IMR-90 (cell line): ENCODE measurements at regions of chr1 and their contacts with region 1.

Region 1: DNA sequence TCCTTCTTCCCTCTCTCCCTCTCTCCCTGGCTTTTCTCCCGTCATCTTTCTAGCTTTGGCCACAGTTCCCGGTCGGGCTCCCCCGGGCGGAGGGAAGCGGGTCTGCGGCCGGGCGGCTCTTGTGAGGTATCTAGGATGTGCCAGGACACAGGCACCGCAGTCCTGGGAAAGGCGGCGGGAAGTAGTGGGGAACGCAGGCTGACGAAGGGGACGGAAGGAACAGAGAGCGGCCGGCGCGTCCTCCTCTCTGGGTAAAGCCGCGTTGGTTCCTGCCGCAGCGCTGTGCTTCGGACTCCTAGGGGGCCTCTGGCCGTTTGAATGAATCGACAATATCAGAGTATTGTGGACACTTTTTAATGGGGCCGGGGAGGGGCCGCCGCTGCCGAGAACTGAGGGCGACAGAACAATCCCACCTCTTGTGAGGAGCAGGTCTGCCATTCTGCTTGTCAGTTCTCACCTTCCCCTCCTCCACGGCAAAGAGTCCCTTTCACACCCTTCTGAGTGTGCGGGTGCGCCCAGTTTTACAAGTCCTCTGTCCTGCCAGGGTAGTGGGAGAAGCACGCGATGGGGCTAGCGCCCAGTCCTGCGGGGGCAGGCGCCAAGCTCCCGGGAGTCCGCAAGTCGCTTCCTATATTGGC is 1.2 kb upstream of the LHX9 start:
- DNase-seq: peak; percentile 61
- ATAC-seq: peak; percentile 75
- H3K4me3 ChIP-seq: peak overlapping the region; percentile 12
- H3K27ac ChIP-seq: no peak overlapping the region
- H3K4me1 ChIP-seq: peaks cover 10% of the 10 kb centered on the region; the same call in 1 of the 2 replicates
- H3K27me3 ChIP-seq: peaks cover 100% of the 10 kb centered on the region
- CTCF ChIP-seq: peak; percentile 67
- POLR2A ChIP-seq: no peak
- RAD21 ChIP-seq: peak; percentile 60

Region 2: DNA sequence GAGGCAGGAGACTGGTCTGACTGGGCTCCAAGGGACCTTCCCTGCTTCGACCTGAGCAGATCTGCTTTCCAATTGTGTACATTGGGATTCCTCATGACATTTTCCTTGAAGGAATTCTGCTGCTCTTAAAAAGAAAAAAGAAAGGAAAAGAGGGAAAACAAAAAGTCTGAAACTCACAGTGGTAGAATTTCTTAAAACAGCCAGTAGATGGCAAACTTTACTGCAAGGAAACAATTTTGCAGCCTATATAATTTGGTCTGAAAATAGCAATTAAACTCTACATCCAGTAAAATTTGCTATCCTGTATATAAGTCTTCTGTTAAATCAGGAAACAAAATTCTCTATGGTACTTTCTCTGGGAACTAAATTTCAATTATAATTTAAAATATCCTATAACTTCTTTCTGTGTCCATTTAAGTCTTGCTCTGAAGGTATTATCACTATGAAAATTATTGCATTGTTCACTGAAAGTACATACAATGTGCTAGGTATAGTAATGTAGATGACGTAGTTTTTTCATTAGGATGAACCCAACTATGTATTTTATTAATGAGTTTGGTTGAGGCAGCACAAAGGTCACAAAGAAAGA is 588.1 kb before region 1 on chr1:
- CTCF ChIA-PET with region 1: no interaction called
- POLR2A ChIA-PET with region 1: no interaction called
- dilution Hi-C with region 1: no loop called
- in situ Hi-C with region 1: no loop called
- intact Hi-C with region 1: loop called (anchors 5 kb)
- DNase-seq: peak; percentile 16
- ATAC-seq: peak; percentile 49; the same call in 1 of the 2 replicates
- H3K4me3 ChIP-seq: no peak overlapping the region
- H3K27ac ChIP-seq: no peak overlapping the region
- H3K4me1 ChIP-seq: no peaks in the 10 kb centered on the region
- H3K27me3 ChIP-seq: peaks cover 6% of the 10 kb centered on the region
- CTCF ChIP-seq: peak; percentile 61
- POLR2A ChIP-seq: no peak
- RAD21 ChIP-seq: peak; percentile 48

Region 3: DNA sequence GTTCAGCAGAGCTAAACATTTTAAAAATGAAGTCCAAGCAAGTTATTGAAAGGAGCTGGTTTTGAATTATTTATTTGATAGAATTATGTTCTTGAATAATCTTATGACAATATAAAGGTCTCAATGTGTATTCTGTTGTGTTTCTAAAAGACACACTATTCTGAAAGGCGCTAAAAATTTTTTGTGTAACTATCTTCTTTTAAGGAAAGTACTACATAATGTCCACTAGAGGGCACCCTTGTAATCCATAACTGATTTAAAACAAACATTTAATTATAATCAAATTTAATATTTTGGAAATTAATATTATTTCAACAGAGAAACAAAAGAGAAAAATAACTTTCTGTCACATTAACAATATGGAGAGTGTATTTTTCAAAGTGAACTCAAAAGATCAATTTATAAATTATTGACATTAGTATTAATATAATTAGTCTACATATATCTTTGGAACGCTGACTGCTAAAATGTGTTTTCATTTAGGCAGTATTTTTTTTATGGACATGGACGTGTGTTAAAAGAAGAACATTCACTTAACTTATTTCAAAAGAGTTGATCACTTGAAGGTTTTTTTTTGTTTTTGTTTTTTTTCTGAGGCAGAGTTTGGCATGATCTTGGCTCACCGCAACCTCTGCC is 389.1 kb before region 1 on chr1:
- CTCF ChIA-PET with region 1: interaction called, 3 read pairs
- POLR2A ChIA-PET with region 1: no interaction called
- dilution Hi-C with region 1: no loop called
- in situ Hi-C with region 1: loop called (anchors 5 kb)
- intact Hi-C with region 1: loop called (anchors 5 kb)
- DNase-seq: peak; percentile 44
- ATAC-seq: no peak
- H3K4me3 ChIP-seq: no peak overlapping the region
- H3K27ac ChIP-seq: no peak overlapping the region
- H3K4me1 ChIP-seq: no peaks in the 10 kb centered on the region
- H3K27me3 ChIP-seq: no peaks in the 10 kb centered on the region
- CTCF ChIP-seq: peak; percentile 55
- POLR2A ChIP-seq: no peak
- RAD21 ChIP-seq: peak; percentile 45

Region 4: DNA sequence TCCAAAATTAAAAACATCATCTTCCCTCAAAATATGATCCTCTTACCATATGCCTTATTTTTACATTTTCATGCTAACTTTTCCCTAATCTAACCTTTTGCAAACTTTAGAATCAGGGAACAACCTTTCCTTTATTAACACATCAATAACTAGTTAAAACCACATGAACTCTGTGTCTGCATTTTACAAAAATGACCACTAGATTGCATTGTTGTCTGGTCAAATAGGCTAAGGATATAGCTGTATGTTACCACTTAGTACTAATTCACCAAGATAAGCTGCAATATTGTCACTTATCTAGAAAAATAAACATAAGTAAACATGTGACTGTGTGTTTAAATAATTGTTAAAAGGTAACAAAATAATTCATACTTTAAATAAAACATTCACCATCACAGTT is 223.0 kb before region 1 on chr1:
- CTCF ChIA-PET with region 1: no interaction called
- POLR2A ChIA-PET with region 1: no interaction called
- dilution Hi-C with region 1: no loop called
- in situ Hi-C with region 1: no loop called
- intact Hi-C with region 1: loop called (anchors 5 kb)
- DNase-seq: peak; percentile 31
- ATAC-seq: peak; percentile 59; the same call in 1 of the 2 replicates
- H3K4me3 ChIP-seq: no peak overlapping the region
- H3K27ac ChIP-seq: no peak overlapping the region
- H3K4me1 ChIP-seq: no peaks in the 10 kb centered on the region; the same call in 1 of the 2 replicates
- H3K27me3 ChIP-seq: no peaks in the 10 kb centered on the region
- CTCF ChIP-seq: peak; percentile 46
- POLR2A ChIP-seq: no peak
- RAD21 ChIP-seq: peak; percentile 57

Region 5: DNA sequence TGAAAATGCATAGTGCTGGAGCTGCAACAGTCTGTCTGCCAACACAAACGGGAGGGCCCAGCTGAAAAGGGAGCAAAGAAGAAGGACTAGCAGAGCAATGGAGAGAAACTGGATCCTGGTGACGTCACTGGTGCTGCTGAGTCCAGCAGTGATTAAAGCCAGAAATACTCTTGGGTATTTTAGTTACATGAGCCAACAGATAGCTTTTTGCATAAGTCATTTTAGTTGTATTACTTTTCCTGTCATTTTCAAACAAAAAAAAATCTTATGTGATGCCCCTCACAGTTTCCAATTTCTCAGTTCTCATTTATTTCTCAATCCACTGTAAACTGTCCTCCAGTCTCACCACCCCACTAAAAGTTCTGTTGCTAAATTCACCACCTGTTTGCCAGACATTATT is 202.2 kb after region 1 on chr1:
- CTCF ChIA-PET with region 1: no interaction called
- POLR2A ChIA-PET with region 1: no interaction called
- dilution Hi-C with region 1: no loop called
- in situ Hi-C with region 1: no loop called
- intact Hi-C with region 1: no loop called
- DNase-seq: peak; percentile 99
- ATAC-seq: peak; percentile 77
- H3K4me3 ChIP-seq: no peak overlapping the region
- H3K27ac ChIP-seq: peak overlapping the region; percentile 18
- H3K4me1 ChIP-seq: peaks cover 11% of the 10 kb centered on the region
- H3K27me3 ChIP-seq: no peaks in the 10 kb centered on the region
- CTCF ChIP-seq: no peak
- POLR2A ChIP-seq: no peak
- RAD21 ChIP-seq: no peak

Region 6: GRCh38 chr1:198157241-198157846 is 241.4 kb after region 1 on chr1:
- CTCF ChIA-PET with region 1: interaction called, 3 read pairs
- POLR2A ChIA-PET with region 1: no interaction called
- dilution Hi-C with region 1: no loop called
- in situ Hi-C with region 1: no loop called
- intact Hi-C with region 1: loop called (anchors 5 kb)
- DNase-seq: peak; percentile 97
- ATAC-seq: peak; percentile 62
- H3K4me3 ChIP-seq: peak overlapping the region; percentile 77
- H3K27ac ChIP-seq: peak overlapping the region; percentile 93
- H3K4me1 ChIP-seq: peaks cover 6% of the 10 kb centered on the region
- H3K27me3 ChIP-seq: no peaks in the 10 kb centered on the region
- CTCF ChIP-seq: no peak
- POLR2A ChIP-seq: no peak; the same call in 1 of the 2 replicates
- RAD21 ChIP-seq: no peak

Region 7: DNA sequence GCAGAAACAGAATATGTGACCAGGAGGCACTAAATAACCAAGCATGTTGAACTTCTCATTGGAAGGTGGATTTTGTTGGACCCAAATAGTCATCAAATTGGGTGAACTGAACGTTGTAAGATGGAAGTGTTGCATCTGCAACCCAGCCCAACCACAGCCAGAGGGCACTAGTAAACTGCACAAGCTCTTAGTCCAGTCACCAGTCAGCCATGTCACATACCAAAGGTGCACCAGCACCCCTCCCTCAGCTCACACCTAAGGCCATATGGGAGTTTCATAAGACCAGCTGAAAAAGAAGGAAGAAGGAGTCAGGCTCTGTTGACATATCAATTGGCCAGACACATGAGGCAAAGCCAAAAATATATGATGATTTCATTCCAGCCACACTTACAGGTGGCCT is 1629.8 kb after region 1 on chr1:
- CTCF ChIA-PET with region 1: no interaction called
- POLR2A ChIA-PET with region 1: interaction called, 19 read pairs
- dilution Hi-C with region 1: no loop called
- in situ Hi-C with region 1: no loop called
- intact Hi-C with region 1: no loop called
- DNase-seq: no peak
- ATAC-seq: no peak
- H3K4me3 ChIP-seq: no peak overlapping the region
- H3K27ac ChIP-seq: no peak overlapping the region
- H3K4me1 ChIP-seq: peaks cover 7% of the 10 kb centered on the region
- H3K27me3 ChIP-seq: no peaks in the 10 kb centered on the region; the same call in 1 of the 2 replicates
- CTCF ChIP-seq: 0 out of 2 replicates have a peak, but pooled peaks have one; percentile 9
- POLR2A ChIP-seq: no peak
- RAD21 ChIP-seq: no peak